ENCODE measurements at regions of chr4 and their contacts with region 1.

Region 1: DNA sequence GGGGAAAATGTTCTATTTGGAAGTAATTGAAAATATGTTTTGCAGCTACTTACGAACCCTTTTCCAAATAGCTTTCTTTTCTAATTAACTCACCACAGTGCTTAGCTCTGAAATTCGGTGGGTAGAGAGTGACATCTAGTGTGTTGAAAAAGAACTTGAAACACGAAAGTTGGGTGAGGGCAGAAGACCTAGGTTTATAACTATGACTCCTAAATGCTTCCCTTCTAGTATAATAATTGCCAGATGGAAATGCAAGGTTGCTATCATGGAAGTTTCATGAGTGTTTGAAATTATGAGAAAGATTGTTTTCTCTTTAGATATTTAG is 77.3 kb upstream of the NOCT start:
- DNase-seq: peak; percentile 42
- H3K4me3 ChIP-seq: no peak overlapping the region
- H3K27ac ChIP-seq: no peak overlapping the region
- H3K4me1 ChIP-seq: peaks cover 0 to 2% of the 10 kb centered on the region in 2 experiments; a peak in 1 of 4 replicates
- H3K27me3 ChIP-seq: no peaks in the 10 kb centered on the region
- CTCF ChIP-seq: peak; percentile 65
- EP300 ChIP-seq: no peak
- RAD21 ChIP-seq: peak; percentile 87

Region 2: GRCh38 chr4:138707746-138708677 is 230.3 kb before region 1 on chr4:
- CTCF ChIA-PET with region 1: no interaction called
- POLR2A ChIA-PET with region 1: no interaction called
- DNase-seq: no peak
- H3K4me3 ChIP-seq: no peak overlapping the region
- H3K27ac ChIP-seq: no peak overlapping the region
- H3K4me1 ChIP-seq: no peaks in the 10 kb centered on the region
- H3K27me3 ChIP-seq: no peaks in the 10 kb centered on the region; the same call in 1 of the 2 replicates
- CTCF ChIP-seq: no peak
- EP300 ChIP-seq: no peak
- RAD21 ChIP-seq: no peak

Region 3: GRCh38 chr4:138919094-138919936 is 19.0 kb before region 1 on chr4:
- CTCF ChIA-PET with region 1: interaction called, 11 read pairs
- POLR2A ChIA-PET with region 1: no interaction called
- DNase-seq: peak; percentile 54
- H3K4me3 ChIP-seq: peak overlapping the region in 1 of 2 experiments; percentile 30; a peak in 1 of 4 replicates
- H3K27ac ChIP-seq: peak overlapping the region in 1 of 2 experiments; percentile 29; a peak in 1 of 4 replicates
- H3K4me1 ChIP-seq: peaks cover 0 to 28% of the 10 kb centered on the region in 2 experiments; a peak in 2 of 4 replicates
- H3K27me3 ChIP-seq: no peaks in the 10 kb centered on the region
- CTCF ChIP-seq: peak; percentile 82
- EP300 ChIP-seq: no peak
- RAD21 ChIP-seq: peak; percentile 97

Region 4: GRCh38 chr4:138948918-138949317 is 10.6 kb after region 1 on chr4:
- CTCF ChIA-PET with region 1: interaction called, 28 read pairs
- POLR2A ChIA-PET with region 1: no interaction called
- DNase-seq: no peak
- H3K4me3 ChIP-seq: no peak overlapping the region
- H3K27ac ChIP-seq: no peak overlapping the region
- H3K4me1 ChIP-seq: peaks cover 0 to 4% of the 10 kb centered on the region in 2 experiments; a peak in 2 of 4 replicates
- H3K27me3 ChIP-seq: no peaks in the 10 kb centered on the region
- CTCF ChIP-seq: no peak
- EP300 ChIP-seq: no peak
- RAD21 ChIP-seq: no peak

Measured in SK-N-SH (cell line).